Cardiac septum (tissue), 1 donor: ENCODE measurements at regions of chr17 and their contacts with region 1.

Region 1: GRCh38 chr17:28951991-28952975 is 965 bp upstream of the PHF12 start:
- DNase-seq: peak; percentile 97

Region 2: GRCh38 chr17:28335201-28335955 is 616.9 kb before region 1 on chr17 and contains the starts of genes IFT20 and TNFAIP1:
- intact Hi-C with region 1: loop called (anchors 5 kb)
- DNase-seq: peak; percentile 99
- total RNA-seq, gene IFT20: 17.3 TPM
- total RNA-seq, gene TNFAIP1: 58.5 TPM

Region 3: GRCh38 chr17:28718334-28719030 is 233.8 kb before region 1 on chr17:
- intact Hi-C with region 1: loop called (anchors 1 kb)
- DNase-seq: no peak

Region 4: DNA sequence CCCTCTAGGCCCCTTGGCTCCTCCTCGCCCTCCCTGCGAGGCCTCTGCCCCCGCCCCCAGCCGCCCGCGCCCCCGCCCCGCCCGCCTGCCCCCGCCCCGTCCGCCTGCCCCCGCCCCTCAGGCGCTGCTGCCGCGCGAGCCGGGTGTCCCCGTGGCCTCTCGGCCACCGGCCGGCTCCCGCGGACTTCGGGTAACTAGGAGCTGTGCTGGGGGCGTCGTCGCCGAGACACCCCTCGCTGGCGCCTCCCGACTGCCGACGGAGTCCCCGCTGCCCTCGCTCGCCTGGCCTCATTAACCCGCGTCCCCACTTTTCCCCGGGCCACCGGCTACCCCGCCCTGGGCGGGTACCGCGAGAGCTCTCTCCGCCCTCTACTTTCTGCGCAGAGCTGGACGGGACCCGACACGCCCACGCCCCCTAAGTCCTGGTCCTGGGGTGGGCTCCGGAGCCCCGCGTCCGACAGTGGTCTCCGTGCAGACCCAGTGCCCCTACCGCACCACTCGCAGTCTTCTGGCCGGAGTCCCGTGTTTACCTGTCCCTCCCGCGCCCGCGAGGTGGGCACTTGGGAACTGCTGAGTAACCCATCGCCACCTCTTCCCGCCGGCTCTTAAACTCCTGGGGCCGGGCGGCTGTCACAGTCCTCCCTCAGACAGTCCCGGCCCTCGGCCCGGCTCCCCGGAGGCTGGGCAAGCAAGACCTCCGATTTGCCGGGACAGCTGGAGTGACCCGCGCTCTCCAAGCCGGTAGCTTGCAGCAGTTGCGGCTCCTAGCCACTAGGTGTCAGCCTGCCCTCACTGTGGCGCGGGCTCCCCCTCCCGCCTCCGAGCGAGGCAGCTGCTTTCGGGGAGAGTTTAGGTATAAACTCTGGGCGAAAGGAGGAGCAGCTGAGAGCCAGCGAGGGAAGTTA is 225.8 kb before region 1 on chr17 and contains the start of gene TLCD1:
- intact Hi-C with region 1: loop called (anchors 2 kb)
- DNase-seq: peak; percentile 97
- total RNA-seq, gene TLCD1: 2.4 TPM

Region 5: DNA sequence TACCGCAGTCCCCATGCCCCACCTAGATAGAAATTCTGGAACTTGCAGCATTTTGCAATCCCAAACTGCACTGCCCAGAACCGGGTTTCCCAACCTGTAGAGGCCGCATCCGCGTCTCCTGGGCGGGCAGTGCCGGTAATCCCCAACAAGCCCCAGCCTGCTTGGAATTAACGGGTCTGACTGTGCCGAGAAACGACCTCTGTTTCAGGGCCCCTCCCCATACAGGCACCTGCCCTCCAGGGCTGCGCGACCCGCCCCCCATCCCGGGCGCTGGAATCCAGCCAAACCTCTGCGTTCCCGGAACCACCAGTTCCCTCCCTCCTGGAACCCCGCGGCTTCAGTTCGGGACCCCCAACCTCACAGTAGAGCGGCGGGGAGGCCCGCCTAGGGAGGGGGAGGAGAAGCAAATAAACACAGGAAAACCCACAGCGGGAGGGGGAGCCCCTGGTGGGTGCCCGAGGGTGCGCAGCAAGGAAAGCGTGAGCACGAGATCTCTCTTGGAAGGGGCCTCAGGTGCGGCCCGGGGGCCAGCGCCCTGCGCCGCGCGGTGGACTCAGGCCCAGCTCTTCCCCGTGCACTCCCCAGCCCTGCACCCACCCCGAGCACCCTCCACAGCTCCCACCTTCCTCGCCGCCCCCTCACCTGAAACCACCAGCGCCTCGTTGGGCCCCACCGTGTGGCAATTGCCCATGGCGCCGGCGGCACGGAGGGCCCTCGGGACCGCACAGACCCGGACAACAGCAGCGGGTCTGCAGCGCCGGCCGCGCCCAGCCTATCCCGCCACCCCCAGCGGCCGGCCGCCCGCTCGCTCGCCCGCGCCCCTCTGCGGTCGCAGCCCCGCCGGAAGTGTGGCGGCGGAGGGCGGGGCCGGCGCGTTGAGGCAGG is 55.2 kb before region 1 on chr17 and contains the start of gene FLOT2:
- intact Hi-C with region 1: loop called (anchors 2 kb)
- DNase-seq: peak; percentile 94
- total RNA-seq, gene FLOT2: 80.4 TPM

Region 6: GRCh38 chr17:29005936-29006511 is 53.7 kb after region 1 on chr17 and contains the start of gene SEZ6:
- intact Hi-C with region 1: no loop called
- DNase-seq: peak; percentile 81
- total RNA-seq, gene SEZ6: not detected